Breast epithelium (tissue), 4 donors: ENCODE measurements at regions of chr2 and their contacts with region 1.

Region 1: GRCh38 chr2:28356095-28356911 is 36.4 kb upstream of the FOSL2 start:
- DNase-seq: peak; percentile 67 to 79
- H3K4me3 ChIP-seq: peak overlapping the region in 1 of 3 donors; percentile 14
- H3K27ac ChIP-seq: peak overlapping the region; percentile 70 to 86
- H3K4me1 ChIP-seq: peaks cover 6 to 7% of the 10 kb centered on the region in 2 donors
- H3K27me3 ChIP-seq: no peaks in the 10 kb centered on the region
- CTCF ChIP-seq: no peak
- POLR2A ChIP-seq: no peak

Region 2: DNA sequence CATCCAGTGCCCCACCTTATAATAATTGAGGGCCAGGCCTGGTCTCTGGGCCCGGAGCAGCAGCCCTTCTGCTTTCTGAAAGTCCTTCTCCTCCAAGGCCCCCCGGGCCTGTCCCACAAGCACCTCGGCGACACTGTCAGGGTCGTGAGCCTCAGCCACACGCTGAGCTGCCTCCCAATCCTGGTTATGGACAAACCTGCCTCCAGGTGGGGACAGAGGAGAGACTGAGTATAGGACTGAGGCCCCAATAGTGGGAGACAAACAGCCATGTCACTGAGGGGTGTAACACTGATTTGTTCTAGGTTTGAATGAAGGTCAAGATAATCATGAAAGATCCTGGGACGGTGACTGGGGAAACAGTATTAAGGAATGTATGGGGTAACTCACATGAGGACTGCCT is 902.3 kb before region 1 on chr2:
- intact Hi-C with region 1: no loop called
- DNase-seq: no peak
- H3K4me3 ChIP-seq: no peak overlapping the region
- H3K27ac ChIP-seq: no peak overlapping the region
- H3K4me1 ChIP-seq: no peaks in the 10 kb centered on the region
- H3K27me3 ChIP-seq: no peaks in the 10 kb centered on the region
- CTCF ChIP-seq: no peak
- POLR2A ChIP-seq: no peak

Region 3: GRCh38 chr2:28310107-28310506 is 46.2 kb before region 1 on chr2:
- intact Hi-C with region 1: loop called (anchors 1 kb)
- DNase-seq: no peak
- H3K4me3 ChIP-seq: no peak overlapping the region
- H3K27ac ChIP-seq: no peak overlapping the region
- H3K4me1 ChIP-seq: no peaks in the 10 kb centered on the region
- H3K27me3 ChIP-seq: no peaks in the 10 kb centered on the region
- CTCF ChIP-seq: no peak
- POLR2A ChIP-seq: no peak

Region 4: DNA sequence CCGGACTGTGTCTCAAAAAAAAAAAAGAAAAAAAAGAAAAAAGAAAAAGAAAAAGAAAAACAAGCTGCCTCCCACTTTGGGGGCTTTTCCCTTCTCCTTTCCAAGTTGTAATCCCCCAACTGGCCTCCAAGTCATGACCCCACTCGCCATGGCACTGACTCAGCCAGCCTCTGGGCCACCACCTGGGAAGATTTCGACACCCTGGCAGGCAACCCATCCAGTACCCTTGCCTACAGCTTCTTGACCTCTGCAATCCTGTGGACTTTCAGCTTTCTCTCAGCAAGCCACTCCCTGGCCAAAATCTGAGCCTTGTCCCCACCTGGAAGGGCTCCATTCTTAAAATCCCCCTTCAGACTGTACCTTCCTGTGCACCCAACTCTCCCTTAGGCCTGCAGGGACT is 14.1 kb after region 1 on chr2:
- intact Hi-C with region 1: loop called (anchors 1 kb)
- DNase-seq: no peak
- H3K4me3 ChIP-seq: no peak overlapping the region
- H3K27ac ChIP-seq: no peak overlapping the region
- H3K4me1 ChIP-seq: no peaks in the 10 kb centered on the region
- H3K27me3 ChIP-seq: no peaks in the 10 kb centered on the region
- CTCF ChIP-seq: no peak
- POLR2A ChIP-seq: no peak

Region 5: GRCh38 chr2:29314816-29315571 is 958.7 kb after region 1 on chr2:
- intact Hi-C with region 1: no loop called
- DNase-seq: no peak
- H3K4me3 ChIP-seq: no peak overlapping the region
- H3K27ac ChIP-seq: no peak overlapping the region
- H3K4me1 ChIP-seq: no peaks in the 10 kb centered on the region
- H3K27me3 ChIP-seq: peaks cover 0 to 3% of the 10 kb centered on the region in 2 donors
- CTCF ChIP-seq: no peak
- POLR2A ChIP-seq: no peak